A673 (cell line): ENCODE measurements at regions of chr9 and their contacts with region 1.

Region 1: GRCh38 chr9:121267689-121268597 is at the start of gene GSN:
- DNase-seq: peak; percentile 69
- H3K4me3 ChIP-seq: peak within 1 kb of the TSS; percentile 73
- H3K27ac ChIP-seq: no peak within 1 kb of the TSS
- H3K4me1 ChIP-seq: peaks cover 19% of the 10 kb centered on the region
- H3K27me3 ChIP-seq: no peaks in the 10 kb centered on the region
- CTCF ChIP-seq: no peak
- total RNA-seq, gene GSN: 28.4 and 43.7 TPM in 2 replicates

Region 2: DNA sequence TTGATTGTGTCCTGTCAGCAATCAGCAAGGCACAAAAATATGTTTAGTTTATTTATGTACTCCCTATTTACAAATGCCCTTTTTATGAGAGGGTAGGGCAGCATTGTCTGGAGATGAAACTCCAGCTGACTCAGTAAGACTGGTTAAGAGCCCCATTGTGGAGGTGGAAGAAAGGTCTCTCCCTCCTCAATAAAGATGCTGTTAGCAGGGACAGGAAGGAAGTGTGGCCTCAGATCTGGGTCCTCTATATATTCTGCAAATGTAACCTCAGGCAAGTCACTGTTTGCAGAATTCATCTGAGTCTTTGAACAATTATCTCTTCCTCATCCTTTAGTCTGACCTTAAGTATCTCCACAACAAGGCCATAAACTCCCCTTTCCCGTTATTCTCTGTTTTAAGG is 293.0 kb before region 1 on chr9:
- CTCF ChIA-PET with region 1: no interaction called
- POLR2A ChIA-PET with region 1: no interaction called
- intact Hi-C with region 1: no loop called
- DNase-seq: no peak
- H3K4me3 ChIP-seq: no peak overlapping the region
- H3K27ac ChIP-seq: no peak overlapping the region
- H3K4me1 ChIP-seq: no peaks in the 10 kb centered on the region
- H3K27me3 ChIP-seq: no peaks in the 10 kb centered on the region
- CTCF ChIP-seq: no peak

Region 3: GRCh38 chr9:121194743-121195142 is 73.2 kb before region 1 on chr9:
- CTCF ChIA-PET with region 1: no interaction called
- POLR2A ChIA-PET with region 1: no interaction called
- intact Hi-C with region 1: no loop called
- DNase-seq: no peak
- H3K4me3 ChIP-seq: no peak overlapping the region
- H3K27ac ChIP-seq: peak overlapping the region; percentile 39
- H3K4me1 ChIP-seq: peaks cover 92% of the 10 kb centered on the region
- H3K27me3 ChIP-seq: no peaks in the 10 kb centered on the region
- CTCF ChIP-seq: no peak

Region 4: GRCh38 chr9:121226186-121226585 is 41.8 kb before region 1 on chr9:
- CTCF ChIA-PET with region 1: no interaction called
- POLR2A ChIA-PET with region 1: no interaction called
- intact Hi-C with region 1: loop called (anchors 5 kb)
- DNase-seq: no peak
- H3K4me3 ChIP-seq: no peak overlapping the region
- H3K27ac ChIP-seq: no peak overlapping the region
- H3K4me1 ChIP-seq: peaks cover 23% of the 10 kb centered on the region
- H3K27me3 ChIP-seq: no peaks in the 10 kb centered on the region
- CTCF ChIP-seq: no peak

Region 5: DNA sequence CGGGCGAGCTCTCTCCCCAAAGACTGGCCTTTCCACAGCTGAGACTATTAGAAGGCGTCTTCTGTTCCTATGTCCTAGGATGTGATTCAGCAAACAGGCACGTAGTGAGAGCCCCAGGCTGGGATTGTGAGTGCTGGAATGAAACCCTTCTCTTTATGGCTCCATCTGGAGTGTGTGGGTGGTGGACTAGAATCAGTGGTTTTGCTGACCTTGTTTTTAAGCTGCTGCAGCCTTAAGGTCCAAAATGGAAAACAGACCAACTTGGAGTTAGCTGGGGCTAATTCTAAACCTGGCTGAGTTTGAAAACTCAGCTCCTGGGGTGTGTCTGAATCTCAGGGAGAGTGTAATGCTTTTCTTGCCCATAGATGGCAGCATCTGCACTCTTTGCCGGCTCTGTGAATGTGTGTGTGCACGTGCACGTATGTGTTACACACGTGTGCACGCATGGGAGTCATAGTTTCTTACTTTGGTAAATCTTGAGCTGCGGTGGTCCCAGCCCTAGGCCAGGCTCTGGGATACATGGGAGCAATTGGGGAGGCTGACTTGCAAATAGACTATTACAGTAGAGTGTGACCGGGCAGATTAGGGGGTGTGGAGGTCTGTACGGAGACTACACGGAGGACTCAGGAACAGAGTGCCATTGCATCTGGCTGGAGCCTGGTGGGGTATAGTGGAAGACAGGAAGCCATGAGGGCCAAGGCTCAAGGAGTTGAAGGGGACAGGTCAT is 10.8 kb after region 1 on chr9:
- CTCF ChIA-PET with region 1: interaction called, 10 read pairs
- POLR2A ChIA-PET with region 1: no interaction called
- intact Hi-C with region 1: no loop called
- DNase-seq: peak; percentile 86
- H3K4me3 ChIP-seq: no peak overlapping the region
- H3K27ac ChIP-seq: no peak overlapping the region
- H3K4me1 ChIP-seq: peaks cover 35% of the 10 kb centered on the region
- H3K27me3 ChIP-seq: no peaks in the 10 kb centered on the region
- CTCF ChIP-seq: peak; percentile 89